MCF 10A (cell line): ENCODE measurements at regions of chrX and their contacts with region 1.

Region 1: GRCh38 chrX:71671043-71671780 is 3.9 kb downstream of the LOC101059915 start:
- DNase-seq: no peak
- H3K4me3 Mint-ChIP-seq: no peak overlapping the region
- H3K27ac Mint-ChIP-seq: no peak overlapping the region
- H3K4me1 Mint-ChIP-seq: no peaks in the 10 kb centered on the region
- H3K27me3 Mint-ChIP-seq: peaks cover 67% of the 10 kb centered on the region
- CTCF ChIP-seq: no peak

Region 2: DNA sequence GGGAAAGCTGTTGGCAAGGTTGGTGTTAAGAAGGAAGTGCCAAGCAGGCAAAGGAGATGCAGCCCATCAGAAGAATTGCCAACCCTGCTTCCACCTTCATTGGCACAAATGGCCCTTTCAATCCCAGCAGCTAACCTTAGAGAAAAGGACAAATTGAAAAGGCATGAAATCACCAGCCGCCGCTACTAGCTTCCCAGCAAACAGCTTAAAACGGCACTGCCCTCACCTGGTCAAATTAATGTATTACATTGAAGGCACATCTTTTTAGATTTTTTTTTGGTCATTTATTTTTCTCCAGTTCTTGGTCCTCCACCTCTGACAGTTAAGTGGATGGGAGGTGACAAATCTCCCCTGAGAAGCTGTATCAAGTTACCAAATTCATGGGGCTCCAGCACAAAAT is 188.4 kb after region 1 on chrX:
- CTCF ChIA-PET with region 1: interaction called, 13 read pairs
- POLR2A ChIA-PET with region 1: no interaction called
- intact Hi-C with region 1: loop called (anchors 1 kb)
- DNase-seq: peak; percentile 61
- H3K4me3 Mint-ChIP-seq: no peak overlapping the region
- H3K27ac Mint-ChIP-seq: no peak overlapping the region
- H3K4me1 Mint-ChIP-seq: peaks cover 5% of the 10 kb centered on the region
- H3K27me3 Mint-ChIP-seq: peaks cover 94% of the 10 kb centered on the region
- CTCF ChIP-seq: peak; percentile 62